Right ventricle myocardium inferior (tissue), 1 donor: ENCODE measurements at regions of chr7 and their contacts with region 1.

Region 1: DNA sequence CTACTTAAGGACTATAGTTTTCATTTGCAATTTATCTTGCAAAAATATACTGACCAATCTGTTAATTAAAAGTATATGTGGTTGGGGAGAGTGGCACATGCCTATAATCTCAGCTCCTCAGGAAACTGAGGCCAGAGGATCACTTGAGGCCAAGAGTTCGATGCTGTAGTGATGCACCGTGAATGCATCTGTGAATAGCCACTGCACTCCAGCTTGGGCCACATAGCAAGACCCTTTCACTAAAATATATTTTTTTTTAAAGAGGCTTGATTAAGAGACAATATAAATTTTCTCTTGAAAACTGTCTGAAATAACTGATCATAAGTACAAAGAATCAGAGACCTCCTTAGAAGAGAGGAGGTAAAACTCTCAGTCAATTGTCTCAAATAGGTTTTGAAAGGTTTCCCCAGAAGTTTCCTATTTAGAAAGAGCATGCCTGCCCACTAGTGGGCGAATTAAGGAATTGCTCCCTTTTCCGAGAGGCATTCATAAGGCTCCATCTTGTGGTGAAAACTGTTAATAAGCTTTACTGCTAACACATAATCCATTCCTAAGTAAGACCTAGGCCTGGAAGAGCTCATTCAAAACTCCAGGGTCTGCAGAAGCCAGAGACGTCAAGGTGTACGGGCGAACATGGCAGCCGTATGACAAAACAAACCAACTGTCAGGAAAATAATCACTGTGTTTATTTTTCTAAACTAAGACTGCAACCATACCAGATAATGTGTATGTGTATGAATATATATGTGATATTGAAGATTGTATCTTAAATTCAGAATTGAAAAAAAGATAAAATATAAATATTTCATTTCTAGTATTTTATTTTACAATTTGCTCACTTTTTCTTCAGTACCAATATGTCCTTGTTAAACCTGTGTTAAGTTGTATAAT is 6.8 kb upstream of the TAS2R40 start:
- DNase-seq: no peak
- ATAC-seq: peak; percentile 67

Region 2: GRCh38 chr7:142603870-142604448 is 611.1 kb before region 1 on chr7:
- intact Hi-C with region 1: loop called (anchors 10 kb)
- DNase-seq: no peak
- ATAC-seq: no peak

Region 3: GRCh38 chr7:142853739-142854371 is 361.2 kb before region 1 on chr7:
- intact Hi-C with region 1: loop called (anchors 5 kb)
- DNase-seq: peak; percentile 86
- ATAC-seq: peak; percentile 74

Region 4: GRCh38 chr7:143008007-143008901 is 206.8 kb before region 1 on chr7:
- intact Hi-C with region 1: loop called (anchors 1 kb)
- DNase-seq: peak; percentile 91
- ATAC-seq: peak; percentile 91

Region 5: GRCh38 chr7:143321734-143322133 is 106.7 kb after region 1 on chr7:
- intact Hi-C with region 1: no loop called
- DNase-seq: no peak
- ATAC-seq: no peak